Left colon (tissue), 2 donors: ENCODE measurements at regions of chr7 and their contacts with region 1.

Region 1: DNA sequence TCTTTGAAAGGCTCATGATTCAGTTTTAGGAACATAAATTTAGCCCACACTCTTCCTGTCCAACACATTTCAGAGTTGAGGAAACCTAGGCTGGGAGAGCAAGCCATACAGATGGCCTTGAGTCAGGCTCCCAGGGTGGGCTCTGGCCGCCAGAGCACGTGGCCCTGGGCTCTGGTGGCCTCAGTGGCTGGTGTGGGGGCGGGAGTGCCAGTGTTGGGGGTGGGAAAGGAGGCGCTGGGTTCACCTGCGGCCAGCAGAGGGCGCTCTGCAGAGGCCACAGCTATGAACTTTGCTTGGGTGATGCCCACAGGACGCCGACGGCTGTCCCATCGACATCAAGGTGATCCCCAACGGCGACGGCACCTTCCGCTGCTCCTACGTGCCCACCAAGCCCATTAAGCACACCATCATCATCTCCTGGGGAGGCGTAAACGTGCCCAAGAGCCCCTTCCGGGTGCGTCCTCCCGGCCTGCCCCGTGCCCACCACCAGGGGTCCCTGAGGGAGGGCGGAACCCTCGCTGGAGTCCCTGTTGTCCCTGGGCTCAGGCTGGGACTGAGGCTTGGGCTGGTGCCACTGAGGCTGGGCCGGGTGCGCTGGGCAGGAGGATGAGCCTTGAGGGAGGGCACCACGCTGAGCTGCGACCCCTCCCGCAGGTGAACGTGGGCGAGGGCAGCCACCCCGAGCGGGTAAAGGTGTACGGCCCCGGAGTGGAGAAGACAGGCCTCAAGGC is 11.9 kb downstream of the FLNC start:
- DNase-seq: peak in 1 of 2 donors; percentile 53
- ATAC-seq: peak; percentile 50

Region 2: DNA sequence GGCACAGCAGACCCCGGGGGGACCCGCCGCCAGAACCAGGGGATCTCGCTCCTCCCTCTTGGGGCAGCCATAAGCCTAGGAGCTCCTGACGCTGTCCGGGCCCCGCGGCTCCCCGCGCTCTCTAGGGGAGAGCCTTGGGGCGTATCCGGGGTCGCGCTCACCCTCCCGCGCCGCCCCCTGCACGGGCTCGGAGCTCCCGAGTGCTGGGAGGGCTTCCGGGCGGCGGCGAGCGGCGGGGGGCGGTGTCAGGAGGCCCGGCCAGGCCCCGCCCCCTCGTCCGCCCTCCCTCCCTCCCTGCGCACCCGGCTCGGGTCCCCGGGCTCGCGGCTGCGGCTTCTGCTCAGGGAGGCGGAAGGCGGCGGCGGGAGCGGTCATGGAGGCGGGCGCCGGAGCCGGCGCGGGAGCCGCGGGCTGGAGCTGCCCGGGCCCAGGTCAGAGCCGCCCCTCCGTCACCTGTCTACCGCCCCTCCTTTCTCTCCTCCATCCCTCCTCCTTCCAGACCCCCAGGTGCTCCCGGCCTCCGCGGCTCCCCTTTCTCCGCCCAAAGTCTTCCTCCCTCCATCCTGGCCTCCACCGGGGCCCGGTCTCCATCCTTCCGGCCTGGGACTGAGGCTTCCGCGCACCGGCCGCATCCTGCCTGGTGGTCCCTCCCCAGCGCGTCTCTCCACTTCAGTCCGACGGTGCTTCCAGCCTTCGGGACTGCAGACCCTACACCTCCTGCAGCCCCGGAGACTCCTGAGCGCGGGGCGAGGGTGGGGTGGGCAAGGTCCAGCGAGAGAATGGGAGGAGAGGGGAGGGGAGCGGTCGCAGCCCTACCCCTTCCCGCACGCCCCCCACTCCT is 50.7 kb before region 1 on chr7:
- intact Hi-C with region 1: loop called in 1 of 2 experiments (anchors 5 kb)
- DNase-seq: peak; percentile 69 to 83
- ATAC-seq: peak; percentile 93

Region 3: DNA sequence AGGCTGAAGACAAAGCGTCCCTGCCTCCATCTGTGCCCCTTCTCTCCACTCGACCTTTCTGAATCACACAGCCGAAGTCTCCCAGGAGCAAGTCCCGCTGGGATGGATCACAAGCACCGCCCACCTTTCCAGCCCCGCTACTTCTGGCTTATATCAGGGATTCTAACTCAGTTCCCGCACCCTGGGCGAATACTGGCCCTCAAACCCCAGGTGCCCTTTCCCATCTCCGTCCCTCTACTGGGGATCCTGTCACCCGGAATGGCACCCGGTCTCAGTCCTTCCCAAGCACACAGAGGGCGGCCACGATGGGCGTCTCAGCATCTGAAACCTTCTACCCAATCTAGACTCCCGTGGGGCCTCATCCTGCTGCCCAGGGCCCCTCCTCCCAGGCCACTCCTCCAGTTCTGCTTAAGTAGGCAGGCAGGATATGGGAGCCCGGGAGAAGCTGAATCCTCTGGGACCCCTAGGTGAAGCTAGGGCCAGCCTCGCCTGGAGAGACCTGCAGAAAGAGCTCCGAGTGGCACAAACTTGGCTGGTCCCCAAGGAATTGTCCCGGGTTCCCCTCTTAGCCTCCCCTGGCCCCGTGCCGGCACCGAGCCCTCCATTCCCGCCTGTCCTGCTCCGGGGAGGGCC is 67.7 kb after region 1 on chr7:
- intact Hi-C with region 1: no loop called
- DNase-seq: peak in 1 of 2 donors; percentile 22
- ATAC-seq: no peak